ENCODE measurements at regions of chr6 and their contacts with region 1.

Region 1: DNA sequence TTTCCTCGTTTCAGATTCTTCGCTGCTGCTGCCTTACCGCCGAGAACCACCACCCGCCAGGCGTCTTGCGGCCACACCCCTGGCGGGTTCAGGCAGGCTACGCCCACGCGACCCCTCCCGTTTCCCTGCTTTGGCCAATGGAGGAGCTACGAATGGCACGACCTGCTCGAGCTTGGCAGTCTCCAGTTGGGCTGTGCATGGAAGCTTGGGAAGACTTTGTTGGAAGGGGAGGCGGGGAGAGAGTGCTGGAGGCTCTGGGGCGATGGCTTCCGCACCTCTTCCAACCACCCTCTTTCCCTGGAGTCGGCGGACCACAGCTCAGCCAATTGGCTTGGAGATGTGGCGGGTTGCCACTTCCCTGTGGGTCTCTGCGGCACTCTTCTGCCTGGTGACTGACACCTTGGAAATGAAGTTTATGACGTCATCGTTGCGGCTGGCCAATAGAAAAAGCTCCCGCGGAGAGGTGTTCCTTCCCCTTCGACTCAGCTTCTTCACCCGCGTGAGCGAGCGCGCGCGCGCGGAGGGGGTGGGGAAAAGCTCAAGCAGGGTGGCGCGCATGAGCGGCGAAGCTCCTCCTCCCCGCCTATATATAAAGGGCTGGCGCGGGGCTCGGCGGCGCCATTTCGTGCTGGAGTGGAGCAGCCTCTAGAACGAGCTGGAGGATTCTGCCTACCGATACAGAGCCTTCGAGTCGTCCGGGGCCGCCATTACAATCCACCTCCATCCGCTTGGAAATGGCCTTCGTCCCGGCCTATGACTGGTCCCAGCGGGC is 3.4 kb downstream of the BRD2 start:
- DNase-seq: peak; percentile 100
- H3K4me3 ChIP-seq: peak overlapping the region; percentile 99
- H3K27ac ChIP-seq: peak overlapping the region; percentile 100
- H3K27me3 ChIP-seq: no peaks in the 10 kb centered on the region
- CTCF ChIP-seq: 0 out of 2 replicates have a peak, but pooled peaks have one; percentile 14

Region 2: DNA sequence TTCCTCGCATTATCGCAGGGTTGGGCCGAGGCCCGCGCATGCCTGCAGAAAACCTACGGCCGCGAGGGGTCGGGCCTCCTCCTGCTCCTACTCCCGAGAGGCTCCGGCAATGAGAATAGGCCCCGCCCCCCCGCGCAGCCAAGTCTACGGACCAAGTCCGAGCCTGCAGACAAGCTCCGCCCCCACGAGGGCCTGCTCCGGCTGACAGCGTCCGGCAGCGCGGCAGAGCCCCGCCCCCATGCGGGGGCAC is 776.2 kb before region 1 on chr6:
- CTCF ChIA-PET with region 1: interaction called, 3 read pairs
- POLR2A ChIA-PET with region 1: interaction called, 30 read pairs
- DNase-seq: peak; percentile 100
- H3K4me3 ChIP-seq: peak overlapping the region; percentile 83
- H3K27ac ChIP-seq: no peak overlapping the region
- H3K27me3 ChIP-seq: no peaks in the 10 kb centered on the region
- CTCF ChIP-seq: peak; percentile 56

Region 3: GRCh38 chr6:32700391-32701040 is 271.3 kb before region 1 on chr6:
- CTCF ChIA-PET with region 1: no interaction called
- POLR2A ChIA-PET with region 1: no interaction called
- DNase-seq: peak; percentile 6
- H3K4me3 ChIP-seq: no peak overlapping the region
- H3K27ac ChIP-seq: no peak overlapping the region
- H3K27me3 ChIP-seq: no peaks in the 10 kb centered on the region
- CTCF ChIP-seq: peak; percentile 70

Region 4: GRCh38 chr6:32853541-32854375 is 118.0 kb before region 1 on chr6 and contains the starts of genes PSMB9 and TAP1:
- CTCF ChIA-PET with region 1: interaction called, 4 read pairs
- POLR2A ChIA-PET with region 1: interaction called, 27 read pairs
- DNase-seq: peak; percentile 73
- H3K4me3 ChIP-seq: peak within 1 kb of the TSS; percentile 86
- H3K27ac ChIP-seq: peak within 1 kb of the TSS; percentile 93
- H3K27me3 ChIP-seq: peaks cover 2% of the 10 kb centered on the region
- CTCF ChIP-seq: peak; percentile 68
- polyA plus RNA-seq, gene PSMB9: 34.8 and 38.4 TPM in 2 replicates
- polyA plus RNA-seq, gene TAP1: 38.6 and 43.6 TPM in 2 replicates

Region 5: GRCh38 chr6:32894080-32895005 is 77.4 kb before region 1 on chr6:
- CTCF ChIA-PET with region 1: interaction called, 3 read pairs
- POLR2A ChIA-PET with region 1: interaction called, 63 read pairs
- DNase-seq: peak; percentile 77
- H3K4me3 ChIP-seq: peak overlapping the region; percentile 77
- H3K27ac ChIP-seq: peak overlapping the region; percentile 66
- H3K27me3 ChIP-seq: no peaks in the 10 kb centered on the region
- CTCF ChIP-seq: no peak

Region 6: GRCh38 chr6:32947552-32948465 is 24.0 kb before region 1 on chr6:
- CTCF ChIA-PET with region 1: interaction called, 72 read pairs
- POLR2A ChIA-PET with region 1: interaction called, 85 read pairs
- DNase-seq: no peak
- H3K4me3 ChIP-seq: no peak overlapping the region
- H3K27ac ChIP-seq: no peak overlapping the region
- H3K27me3 ChIP-seq: no peaks in the 10 kb centered on the region
- CTCF ChIP-seq: peak; percentile 56

Region 7: GRCh38 chr6:33208091-33208967 is 236.6 kb after region 1 on chr6 and contains the start of gene RING1:
- CTCF ChIA-PET with region 1: no interaction called
- POLR2A ChIA-PET with region 1: interaction called, 13 read pairs
- DNase-seq: no peak
- H3K4me3 ChIP-seq: peak within 1 kb of the TSS; percentile 78
- H3K27ac ChIP-seq: peak within 1 kb of the TSS; percentile 91
- H3K27me3 ChIP-seq: no peaks in the 10 kb centered on the region
- CTCF ChIP-seq: no peak
- polyA plus RNA-seq, gene RING1: 23.8 and 26.8 TPM in 2 replicates